ENCODE measurements at regions of chrX and their contacts with region 1.

Region 1: GRCh38 chrX:50036426-50036825 is 114.0 kb downstream of the CLCN5 start:
- DNase-seq: no peak
- H3K4me3 Mint-ChIP-seq: no peak overlapping the region
- H3K27ac Mint-ChIP-seq: no peak overlapping the region
- H3K4me1 Mint-ChIP-seq: no peaks in the 10 kb centered on the region
- H3K27me3 Mint-ChIP-seq: peaks cover 15% of the 10 kb centered on the region
- CTCF ChIP-seq: no peak

Region 2: GRCh38 chrX:49995021-49995731 is 41.2 kb before region 1 on chrX:
- CTCF ChIA-PET with region 1: no interaction called
- POLR2A ChIA-PET with region 1: no interaction called
- intact Hi-C with region 1: loop called (anchors 5 kb)
- DNase-seq: peak; percentile 2
- H3K4me3 Mint-ChIP-seq: no peak overlapping the region
- H3K27ac Mint-ChIP-seq: no peak overlapping the region
- H3K4me1 Mint-ChIP-seq: peaks cover 13% of the 10 kb centered on the region
- H3K27me3 Mint-ChIP-seq: peaks cover 81% of the 10 kb centered on the region
- CTCF ChIP-seq: no peak